Dendritic cell treated with granulocyte-macrophage colony-stimulating factor and Interleukin-4, amounts not matched to agents 40 ng/mL and 50 ng/mL, for 4 days (primary cell): ENCODE measurements at regions of chr17 and their contacts with region 1.

Region 1: GRCh38 chr17:78890498-78890897 is 12.5 kb downstream of the CEP295NL start:
- H3K4me3 Mint-ChIP-seq: peak overlapping the region; percentile 51
- H3K27ac Mint-ChIP-seq: peak overlapping the region; percentile 87
- H3K4me1 Mint-ChIP-seq: peaks cover 95% of the 10 kb centered on the region
- H3K27me3 Mint-ChIP-seq: no peaks in the 10 kb centered on the region

Region 2: DNA sequence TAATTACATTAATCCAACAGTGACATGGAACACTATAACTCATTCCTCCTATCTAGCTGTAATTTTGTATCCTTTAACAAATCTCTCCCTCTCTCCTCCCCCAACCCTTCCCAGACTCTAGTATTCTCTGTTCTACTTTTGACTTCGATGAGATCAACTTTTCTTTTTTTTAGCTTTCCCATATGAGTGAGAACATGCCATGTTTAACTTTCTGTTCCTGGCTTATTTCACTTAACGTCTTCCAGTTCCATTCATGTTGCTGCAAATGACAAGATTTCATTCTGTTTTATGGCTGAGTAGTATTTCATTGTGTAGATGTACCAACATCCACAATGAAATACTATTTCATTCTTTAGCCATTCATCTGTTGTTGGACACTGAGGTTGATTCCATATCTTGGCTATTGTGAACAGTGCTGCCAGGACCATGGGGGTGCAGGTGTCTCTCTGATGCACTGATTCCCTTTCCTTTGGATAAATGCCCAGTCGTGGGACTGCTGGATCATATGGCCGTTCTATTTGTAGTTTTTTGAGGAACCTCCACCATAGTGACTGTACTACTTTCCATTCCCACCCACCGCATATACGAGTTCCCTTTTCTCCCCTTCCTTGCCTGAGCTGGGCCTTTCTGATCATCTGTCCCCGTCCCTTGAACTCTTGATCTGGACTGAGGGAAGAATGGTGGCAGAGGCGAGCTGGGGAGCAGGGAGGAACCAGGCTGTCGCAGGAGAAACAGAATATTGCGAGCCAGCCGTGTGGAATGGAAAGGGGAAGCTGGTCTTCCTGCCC is 20.2 kb after region 1 on chr17:
- intact Hi-C with region 1: loop called (anchors 2 kb)
- H3K4me3 Mint-ChIP-seq: peak overlapping the region; percentile 61
- H3K27ac Mint-ChIP-seq: peak overlapping the region; percentile 91
- H3K4me1 Mint-ChIP-seq: peaks cover 78% of the 10 kb centered on the region
- H3K27me3 Mint-ChIP-seq: no peaks in the 10 kb centered on the region

Region 3: DNA sequence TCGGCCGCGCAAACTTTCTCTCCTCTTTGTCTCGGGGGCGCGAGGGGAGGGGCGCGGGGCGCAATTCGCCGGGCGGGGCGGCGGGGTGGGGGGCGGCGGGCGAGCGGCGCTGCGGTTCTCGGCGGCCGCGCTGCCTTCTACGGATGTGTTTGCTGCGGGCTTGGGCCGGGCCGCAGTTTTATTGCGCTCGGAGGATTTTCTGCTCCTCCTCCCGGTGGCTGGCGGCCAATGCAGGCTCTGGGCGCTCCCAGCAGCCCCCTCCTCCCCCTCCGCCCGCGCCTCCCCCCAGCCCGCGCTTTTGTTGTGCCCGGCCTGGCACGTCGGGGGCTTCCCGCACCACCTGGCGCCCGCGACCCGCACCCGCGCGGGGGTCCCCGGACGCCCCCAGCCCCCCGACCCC is 34.7 kb after region 1 on chr17 and contains the start of gene TIMP2:
- intact Hi-C with region 1: loop called (anchors 2 kb)
- H3K4me3 Mint-ChIP-seq: peak within 1 kb of the TSS; percentile 89
- H3K27ac Mint-ChIP-seq: peak within 1 kb of the TSS; percentile 87
- H3K4me1 Mint-ChIP-seq: peaks cover 43% of the 10 kb centered on the region
- H3K27me3 Mint-ChIP-seq: peaks cover 7% of the 10 kb centered on the region